Gastrocnemius medialis (tissue), 4 donors: ENCODE measurements at regions of chr15 and their contacts with region 1.

Region 1: DNA sequence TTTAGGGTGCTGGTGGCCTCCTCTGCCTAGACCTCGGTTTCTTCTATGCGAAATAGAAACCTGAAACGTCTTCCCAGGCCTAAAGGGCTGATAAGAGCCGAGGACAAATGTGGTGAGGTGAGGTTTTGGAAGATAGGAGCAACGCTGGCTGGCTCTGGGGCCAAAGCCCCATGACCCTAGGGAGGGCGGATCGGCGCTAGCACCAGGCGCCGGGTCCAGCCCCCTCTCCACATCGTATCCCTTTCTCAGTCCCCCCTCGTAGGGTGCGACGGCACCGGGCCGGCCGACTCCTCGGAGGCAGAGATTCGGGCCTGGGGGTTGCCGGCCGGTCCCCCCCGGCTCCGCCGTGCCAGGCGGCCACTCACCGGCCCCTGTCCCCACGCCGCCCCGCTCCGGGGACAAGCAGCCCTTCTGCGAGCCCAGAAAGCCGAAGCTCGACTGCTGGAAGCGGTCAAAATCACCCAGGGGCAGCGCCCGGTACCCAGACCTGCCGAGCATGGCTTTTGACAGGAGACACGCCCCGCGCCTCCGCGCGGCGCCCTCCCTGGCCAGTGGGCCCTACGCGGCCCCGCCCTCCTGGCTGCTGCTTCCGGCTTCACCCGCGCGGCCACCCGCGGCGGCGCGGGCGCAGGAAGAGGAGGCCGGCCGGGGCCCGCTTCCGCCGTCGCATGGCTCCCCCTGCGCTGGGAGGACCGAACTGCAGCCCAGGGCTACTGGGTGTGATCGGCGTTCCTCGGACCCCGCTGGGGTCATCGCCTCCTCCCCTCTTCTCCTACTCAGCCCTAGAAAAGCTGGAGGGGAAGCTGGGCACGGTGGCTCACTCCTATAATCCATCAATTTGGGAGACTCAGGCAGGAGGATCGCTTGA is at the start of gene STOML1:
- DNase-seq: peak; percentile 76 to 90
- ATAC-seq: peak; percentile 75 to 77
- H3K4me3 ChIP-seq: peak within 1 kb of the TSS; percentile 82 to 96 (median 91)
- H3K27ac ChIP-seq: peak within 1 kb of the TSS; percentile 88 to 94 (median 90)
- H3K4me1 ChIP-seq: peaks cover 65 to 78% of the 10 kb centered on the region in 2 donors
- H3K27me3 ChIP-seq: no peaks in the 10 kb centered on the region
- CTCF ChIP-seq: peak; percentile 81 to 97 (median 96)
- POLR2A ChIP-seq: peak; percentile 77
- total RNA-seq, gene STOML1: 15.2 to 28.8 (median 16.9) TPM

Region 2: GRCh38 chr15:73964736-73965093 is 27.2 kb before region 1 on chr15:
- in situ Hi-C with region 1: no loop called
- intact Hi-C with region 1: no loop called
- DNase-seq: peak; percentile 37 to 67
- ATAC-seq: peak; percentile 65 to 95
- H3K4me3 ChIP-seq: no peak overlapping the region
- H3K27ac ChIP-seq: no peak overlapping the region
- H3K4me1 ChIP-seq: no peaks in the 10 kb centered on the region
- H3K27me3 ChIP-seq: peaks cover 0 to 5% (median 0%) of the 10 kb centered on the region in 3 donors
- CTCF ChIP-seq: peak; percentile 75 to 95 (median 89)
- POLR2A ChIP-seq: no peak

Region 3: DNA sequence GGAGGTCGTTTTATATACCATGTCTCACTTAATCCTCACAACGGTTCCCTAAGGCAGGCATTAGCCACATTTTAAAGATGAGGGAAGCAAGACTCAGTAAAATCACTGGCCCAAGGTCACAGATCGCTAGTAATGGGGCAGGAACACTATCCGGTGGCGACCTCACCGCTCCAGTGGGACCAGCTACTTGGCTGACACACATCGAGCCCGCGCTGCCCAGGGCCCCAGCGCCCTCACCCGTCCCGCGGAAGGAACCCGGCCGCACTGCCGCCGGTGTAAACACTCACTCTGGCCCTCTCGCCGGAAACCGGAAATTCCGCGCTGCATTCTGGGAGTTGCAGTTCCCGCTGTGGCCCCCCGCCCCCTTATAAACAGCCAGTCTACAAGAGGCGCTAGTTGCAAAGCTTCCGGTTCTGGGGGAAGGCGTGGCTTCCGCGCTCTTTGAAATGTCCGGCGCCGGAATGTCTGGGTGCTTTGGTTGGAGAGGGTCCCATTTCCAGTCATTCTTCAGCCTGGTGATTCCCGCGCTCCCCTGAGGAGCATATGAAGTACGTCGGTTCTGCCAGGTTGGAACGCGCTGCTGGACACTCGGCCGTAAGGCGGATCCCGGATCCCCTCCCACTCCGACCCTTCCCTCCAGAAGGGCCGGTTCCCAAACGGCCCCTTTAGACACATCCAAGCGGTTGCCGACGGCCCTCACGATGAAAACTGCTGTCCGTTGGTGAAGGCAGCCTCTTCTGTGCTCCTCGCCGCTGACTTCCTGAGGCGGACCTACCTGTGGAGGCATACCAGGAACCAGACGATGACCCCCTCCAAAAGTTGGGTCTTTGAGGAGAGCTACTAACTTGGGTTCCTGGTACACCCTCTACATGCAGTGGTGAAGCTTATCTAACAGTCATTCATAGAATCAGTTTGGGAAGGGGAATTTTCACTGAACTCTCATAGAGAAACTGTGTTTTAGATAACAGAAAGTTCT is 469.2 kb after region 1 on chr15 and contains the start of gene UBL7:
- in situ Hi-C with region 1: loop called in 1 of 4 experiments (anchors 25 kb)
- intact Hi-C with region 1: loop called (anchors 10 kb)
- DNase-seq: peak; percentile 97 to 99
- ATAC-seq: peak; percentile 96 to 97
- H3K4me3 ChIP-seq: peak within 1 kb of the TSS; percentile 64 to 86 (median 74)
- H3K27ac ChIP-seq: peak within 1 kb of the TSS; percentile 87 to 99 (median 92)
- H3K4me1 ChIP-seq: peaks cover 22 to 24% of the 10 kb centered on the region in 2 donors
- H3K27me3 ChIP-seq: no peaks in the 10 kb centered on the region
- CTCF ChIP-seq: peak in 1 of 5 experiments; percentile 12
- POLR2A ChIP-seq: peak; percentile 91 to 96
- total RNA-seq, gene UBL7: 66.4 to 139 (median 83.2) TPM